ENCODE measurements at regions of chr3 and their contacts with region 1.

Region 1: DNA sequence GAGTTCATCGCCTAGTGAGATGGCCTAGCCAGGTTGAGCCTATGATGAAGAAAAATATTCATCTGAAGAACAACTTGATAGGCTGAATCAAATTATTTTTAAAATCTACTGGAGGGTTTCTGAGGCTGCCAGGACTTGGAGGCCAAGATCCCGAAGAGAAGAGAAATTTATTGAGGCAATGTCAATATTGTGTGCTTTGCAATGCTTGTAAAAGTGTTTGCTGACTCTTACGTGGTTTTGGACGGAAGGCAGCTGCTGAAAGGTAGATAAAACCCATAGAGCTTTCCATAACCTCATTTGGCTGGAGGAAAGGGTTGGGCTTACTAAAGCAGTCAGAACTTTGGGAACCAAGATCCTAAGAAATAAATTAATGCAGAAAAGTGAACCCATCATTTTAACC is 361.0 kb upstream of the IL12A start:
- DNase-seq: peak; percentile 96
- ATAC-seq: peak; percentile 89
- H3K4me3 ChIP-seq: peak overlapping the region; percentile 3; the same call in 1 of the 2 replicates
- H3K27ac ChIP-seq: peak overlapping the region; percentile 88
- H3K4me1 ChIP-seq: peaks cover 61% of the 10 kb centered on the region
- H3K27me3 ChIP-seq: no peaks in the 10 kb centered on the region
- CTCF ChIP-seq: no peak

Region 2: GRCh38 chr3:159654186-159655134 is 26.8 kb after region 1 on chr3:
- CTCF ChIA-PET with region 1: no interaction called
- POLR2A ChIA-PET with region 1: interaction called, 11 read pairs
- intact Hi-C with region 1: no loop called
- DNase-seq: peak; percentile 89
- ATAC-seq: peak; percentile 84
- H3K4me3 ChIP-seq: no peak overlapping the region
- H3K27ac ChIP-seq: peak overlapping the region; percentile 69
- H3K4me1 ChIP-seq: peaks cover 29% of the 10 kb centered on the region
- H3K27me3 ChIP-seq: no peaks in the 10 kb centered on the region
- CTCF ChIP-seq: no peak

Measured in PC-3 (cell line).